Posterior vena cava (tissue), 2 donors: ENCODE measurements at regions of chr21 and their contacts with region 1.

Region 1: GRCh38 chr21:43719748-43720538 is 1.0 kb downstream of the PDXK start:
- DNase-seq: peak; percentile 87

Region 2: GRCh38 chr21:43669828-43670605 is 49.9 kb before region 1 on chr21:
- intact Hi-C with region 1: loop called in 1 of 2 experiments (anchors 2 kb)
- DNase-seq: no peak

Region 3: DNA sequence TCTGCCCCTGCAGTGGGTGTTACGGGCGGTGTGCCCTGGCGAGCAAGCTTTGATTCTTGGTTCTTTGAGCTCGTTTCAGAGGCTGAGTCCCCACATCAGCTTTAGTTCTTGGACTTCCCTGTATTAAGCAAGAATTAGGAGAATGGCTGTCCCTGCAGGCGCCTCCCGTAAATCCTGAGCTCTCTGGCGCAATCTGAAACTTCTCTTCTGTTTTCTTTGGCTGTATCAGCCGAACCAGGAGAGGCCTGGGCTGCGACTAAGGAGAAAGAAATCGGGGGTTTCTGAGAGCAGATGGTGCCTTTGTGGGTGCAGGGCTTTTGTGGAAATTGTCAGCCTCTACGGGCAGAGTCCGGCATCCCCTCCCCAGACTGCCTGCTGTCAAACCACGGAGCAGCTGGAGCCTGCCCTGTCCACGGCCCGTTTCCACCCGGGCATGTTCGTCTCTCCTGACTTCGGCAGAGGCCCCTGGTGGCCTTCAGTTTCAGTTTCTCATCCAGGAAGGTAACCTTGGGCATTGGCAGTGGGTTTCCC is 38.2 kb after region 1 on chr21:
- intact Hi-C with region 1: no loop called
- DNase-seq: no peak

Region 4: GRCh38 chr21:43775795-43776430 is 56.0 kb after region 1 on chr21 and contains the start of gene CSTB:
- intact Hi-C with region 1: loop called in 1 of 2 experiments (anchors 5 kb)
- DNase-seq: peak; percentile 96
- total RNA-seq, gene CSTB: 29.0 to 48.6 TPM